ENCODE measurements at regions of chr11 and their contacts with region 1.

Region 1: DNA sequence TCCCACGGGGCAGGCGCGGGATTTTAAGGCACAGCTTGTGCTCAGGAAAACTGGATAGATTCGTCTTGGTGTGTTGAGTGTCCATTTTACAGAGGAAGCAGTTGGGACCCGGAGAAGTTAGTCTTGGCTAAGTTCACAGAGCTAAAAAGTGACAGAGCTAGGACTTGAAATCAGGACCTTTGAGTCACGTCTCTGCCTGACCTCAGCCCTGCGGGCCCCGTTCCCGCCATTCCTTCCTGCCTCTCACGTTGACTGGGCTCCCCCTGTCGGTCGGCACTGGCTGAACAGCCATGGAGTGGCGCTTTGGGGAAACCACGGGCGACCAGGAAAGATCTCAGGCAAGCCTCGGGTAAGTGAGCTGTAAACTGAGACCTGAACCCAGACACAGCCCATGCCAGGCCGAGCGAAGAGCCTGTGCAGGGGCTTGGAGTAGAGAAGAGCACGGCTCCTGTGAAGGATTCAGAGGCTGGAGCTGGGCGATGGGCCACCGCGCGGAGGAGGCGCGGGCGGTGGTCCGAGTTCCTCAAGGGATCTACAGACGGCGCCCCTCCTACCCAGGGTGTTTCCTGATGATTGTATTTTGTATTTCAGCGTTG is 54.1 kb downstream of the WNT11 start:
- DNase-seq: peak; percentile 84
- H3K4me3 ChIP-seq: peak overlapping the region; percentile 37 to 58 (median 44)
- H3K27ac ChIP-seq: peak overlapping the region in 1 of 2 donors; percentile 22
- H3K4me1 ChIP-seq: no peaks in the 10 kb centered on the region
- H3K27me3 ChIP-seq: no peaks in the 10 kb centered on the region
- CTCF ChIP-seq: peak; percentile 92 to 95 (median 94)
- POLR2A ChIP-seq: no peak

Region 2: GRCh38 chr11:75903276-75903675 is 248.9 kb before region 1 on chr11:
- intact Hi-C with region 1: loop called (anchors 5 kb)
- DNase-seq: no peak
- H3K4me3 ChIP-seq: no peak overlapping the region
- H3K27ac ChIP-seq: no peak overlapping the region
- H3K4me1 ChIP-seq: no peaks in the 10 kb centered on the region
- H3K27me3 ChIP-seq: no peaks in the 10 kb centered on the region
- CTCF ChIP-seq: no peak
- POLR2A ChIP-seq: no peak

Region 3: GRCh38 chr11:76107971-76108370 is 44.2 kb before region 1 on chr11:
- intact Hi-C with region 1: no loop called
- DNase-seq: no peak
- H3K4me3 ChIP-seq: no peak overlapping the region
- H3K27ac ChIP-seq: no peak overlapping the region
- H3K4me1 ChIP-seq: no peaks in the 10 kb centered on the region
- H3K27me3 ChIP-seq: no peaks in the 10 kb centered on the region
- CTCF ChIP-seq: no peak
- POLR2A ChIP-seq: no peak

Region 4: DNA sequence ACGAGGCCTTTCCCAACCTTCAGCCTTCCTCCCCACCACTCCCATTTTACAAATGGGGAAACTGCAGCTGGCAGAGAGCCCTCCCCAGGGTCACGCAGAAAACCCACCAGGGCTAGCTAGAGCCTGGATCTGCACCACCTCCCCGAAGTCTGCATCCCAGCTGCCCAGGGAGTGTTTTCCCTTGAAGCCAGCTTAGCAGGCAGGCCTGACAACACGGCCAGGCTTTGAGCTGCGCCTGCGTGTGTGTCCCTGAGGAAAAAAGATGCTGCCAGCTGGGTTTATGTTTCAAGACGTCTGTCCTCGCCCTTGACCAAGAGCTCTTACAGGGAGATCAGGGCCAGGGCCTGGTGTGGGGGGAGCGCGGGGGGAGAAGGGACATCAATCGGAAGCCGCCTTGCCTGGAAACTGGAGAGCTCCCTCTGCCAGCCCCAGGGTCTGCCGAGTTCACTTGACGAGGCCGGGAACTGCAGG is 33.8 kb after region 1 on chr11:
- intact Hi-C with region 1: loop called (anchors 2 kb)
- DNase-seq: peak in 1 of 2 donors; percentile 23
- H3K4me3 ChIP-seq: no peak overlapping the region
- H3K27ac ChIP-seq: peak overlapping the region; percentile 40 to 84
- H3K4me1 ChIP-seq: peaks cover 0 to 4% of the 10 kb centered on the region in 2 donors
- H3K27me3 ChIP-seq: no peaks in the 10 kb centered on the region
- CTCF ChIP-seq: no peak
- POLR2A ChIP-seq: no peak

Measured in breast epithelium (tissue), 4 donors.